HCT116 (cell line): ENCODE measurements at regions of chr15 and their contacts with region 1.

Region 1: GRCh38 chr15:29424118-29424517 is 154.5 kb upstream of the NSMCE3 start:
- DNase-seq: no peak
- ATAC-seq: 0 out of 2 replicates have a peak, but pooled peaks have one; percentile 34
- H3K4me3 ChIP-seq: no peak overlapping the region
- H3K27ac ChIP-seq: no peak overlapping the region
- H3K4me1 ChIP-seq: no peaks in the 10 kb centered on the region
- H3K27me3 ChIP-seq: no peaks in the 10 kb centered on the region
- CTCF ChIP-seq: no peak
- POLR2A ChIP-seq: no peak
- RAD21 ChIP-seq: no peak

Region 2: GRCh38 chr15:29259233-29259632 is 164.9 kb before region 1 on chr15:
- CTCF ChIA-PET with region 1: no interaction called
- POLR2A ChIA-PET with region 1: no interaction called
- RAD21 ChIA-PET with region 1: no interaction called
- intact Hi-C with region 1: loop called (anchors 10 kb)
- DNase-seq: no peak
- ATAC-seq: no peak
- H3K4me3 ChIP-seq: no peak overlapping the region
- H3K27ac ChIP-seq: no peak overlapping the region
- H3K4me1 ChIP-seq: no peaks in the 10 kb centered on the region
- H3K27me3 ChIP-seq: no peaks in the 10 kb centered on the region
- CTCF ChIP-seq: no peak
- POLR2A ChIP-seq: no peak
- RAD21 ChIP-seq: no peak

Region 3: DNA sequence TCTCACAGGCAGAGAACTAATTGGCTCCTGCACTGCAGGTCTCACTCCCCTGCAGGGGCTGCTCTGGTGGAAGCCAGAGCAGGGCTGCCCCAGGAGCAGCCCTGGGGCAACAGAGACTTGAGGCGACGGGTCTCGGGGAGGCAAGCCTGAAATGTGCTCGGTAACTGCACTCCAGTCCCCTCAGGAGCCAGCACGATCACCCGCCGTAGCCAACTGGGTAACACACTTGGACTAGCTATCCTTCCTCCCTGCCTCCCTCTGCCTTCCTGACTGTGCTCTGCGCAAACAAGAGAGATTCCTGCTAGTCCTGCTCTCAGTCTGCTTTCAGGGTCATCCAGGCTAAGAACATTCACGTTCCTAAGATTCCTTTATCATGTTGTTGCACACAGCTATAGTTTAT is 13.8 kb before region 1 on chr15:
- CTCF ChIA-PET with region 1: no interaction called
- POLR2A ChIA-PET with region 1: no interaction called
- RAD21 ChIA-PET with region 1: no interaction called
- intact Hi-C with region 1: no loop called
- DNase-seq: no peak
- ATAC-seq: no peak
- H3K4me3 ChIP-seq: no peak overlapping the region
- H3K27ac ChIP-seq: no peak overlapping the region
- H3K4me1 ChIP-seq: no peaks in the 10 kb centered on the region
- H3K27me3 ChIP-seq: peaks cover 22% of the 10 kb centered on the region
- CTCF ChIP-seq: no peak
- POLR2A ChIP-seq: no peak
- RAD21 ChIP-seq: no peak

Region 4: GRCh38 chr15:29451201-29451781 is 27.2 kb after region 1 on chr15:
- CTCF ChIA-PET with region 1: no interaction called
- POLR2A ChIA-PET with region 1: no interaction called
- RAD21 ChIA-PET with region 1: no interaction called
- intact Hi-C with region 1: no loop called
- DNase-seq: peak; percentile 7
- ATAC-seq: peak; percentile 79
- H3K4me3 ChIP-seq: no peak overlapping the region
- H3K27ac ChIP-seq: no peak overlapping the region; the same call in 1 of the 2 replicates
- H3K4me1 ChIP-seq: peaks cover 21 to 32% of the 10 kb centered on the region in 2 experiments; a peak in 3 of 4 replicates
- H3K27me3 ChIP-seq: peaks cover 10% of the 10 kb centered on the region
- CTCF ChIP-seq: peak; percentile 9 to 64 (median 48); a peak in 4 of 6 replicates
- POLR2A ChIP-seq: no peak
- RAD21 ChIP-seq: peak; percentile 24; the same call in 1 of the 2 replicates